Activated T-helper 1 cell treated with anti-CD3 and anti-CD28 coated beads, Interleukin-12 subunit alpha, Interleukin-12 subunit beta, Interleukin-2, Interleukin-4 antibody, amounts not matched to agents 30 ng/mL and 10 ng/mL and 1 ng/mL, durations not matched to agents 14 hours and 24 hours and 36 hours (primary cell): ENCODE measurements at regions of chr7 and their contacts with region 1.

Region 1: GRCh38 chr7:20598459-20599309 is 16.8 kb upstream of the ABCB5 start:
- DNase-seq: no peak
- H3K4me3 Mint-ChIP-seq: no peak overlapping the region
- H3K27ac Mint-ChIP-seq: no peak overlapping the region
- H3K4me1 Mint-ChIP-seq: no peaks in the 10 kb centered on the region
- H3K27me3 Mint-ChIP-seq: peaks cover 3% of the 10 kb centered on the region

Region 2: DNA sequence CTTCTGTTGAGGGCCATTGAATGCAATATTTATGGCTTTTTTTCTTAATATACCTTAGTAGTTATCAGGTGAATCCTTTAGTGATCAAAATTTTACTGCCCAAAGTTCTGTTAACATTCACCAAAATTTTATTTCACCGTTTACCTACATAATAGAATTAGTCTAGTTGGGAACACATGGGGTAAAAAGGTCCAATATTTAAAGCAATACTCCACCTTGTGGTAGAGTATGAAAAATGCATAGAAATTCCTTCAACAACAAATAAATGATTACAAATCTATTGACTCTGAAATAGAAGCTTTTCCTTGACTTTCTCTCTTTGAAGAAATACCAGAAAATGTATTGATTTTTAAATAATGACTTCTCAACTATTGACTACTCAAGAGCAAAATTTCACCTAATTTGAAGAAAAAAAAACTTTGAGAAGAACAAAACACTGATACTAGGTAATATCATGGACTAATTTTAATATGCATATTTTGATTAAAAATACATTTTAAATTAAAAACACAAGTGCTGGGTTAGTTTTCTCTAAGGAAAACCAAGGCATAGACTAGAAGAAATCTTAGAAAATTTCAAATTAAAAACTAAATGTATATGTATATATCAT is 933.2 kb before region 1 on chr7:
- intact Hi-C with region 1: loop called (anchors 1 kb)
- DNase-seq: no peak
- H3K4me3 Mint-ChIP-seq: no peak overlapping the region
- H3K27ac Mint-ChIP-seq: no peak overlapping the region
- H3K4me1 Mint-ChIP-seq: no peaks in the 10 kb centered on the region
- H3K27me3 Mint-ChIP-seq: peaks cover 5% of the 10 kb centered on the region

Region 3: DNA sequence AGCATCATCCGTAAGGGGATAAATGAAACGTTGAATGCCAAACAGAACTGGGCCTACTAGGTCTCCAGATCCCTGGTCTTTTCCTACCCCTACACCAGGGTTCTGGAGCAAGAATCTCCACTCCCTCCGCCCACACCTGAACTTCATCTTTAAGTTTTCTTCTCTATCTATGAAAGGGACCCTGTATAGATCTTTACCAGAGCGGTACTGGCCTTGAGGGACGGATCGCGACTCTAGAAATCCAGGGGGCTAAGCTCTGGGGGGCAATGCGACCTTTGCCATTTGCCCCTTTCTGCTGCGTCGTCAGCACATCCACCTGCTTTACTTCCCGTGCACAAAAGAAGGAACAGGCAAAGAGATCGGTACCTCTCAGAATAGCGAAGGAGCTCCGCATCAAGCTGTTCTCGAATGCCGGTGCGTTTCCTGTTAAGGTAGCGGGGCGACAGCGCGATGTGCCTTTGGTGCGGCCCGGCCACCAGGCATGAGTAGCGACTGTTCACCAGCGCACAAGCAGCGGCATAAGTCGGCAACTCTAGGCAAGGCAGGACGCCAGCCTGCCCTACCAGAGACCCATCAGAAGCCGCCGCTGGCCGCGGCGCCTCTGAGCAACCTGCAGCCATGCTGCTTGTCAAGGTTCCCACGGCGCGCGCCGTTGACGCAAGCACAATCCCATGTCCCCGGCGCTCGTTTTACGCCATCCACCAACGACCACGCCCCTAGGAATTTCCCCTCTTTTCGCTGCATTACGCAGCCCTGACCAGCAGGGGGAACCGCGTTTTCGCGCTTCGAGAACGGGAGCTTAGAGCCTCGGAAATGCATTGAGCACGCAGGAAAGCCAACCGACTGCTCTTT is 890.1 kb before region 1 on chr7 and contains the start of gene POLR1F:
- intact Hi-C with region 1: loop called (anchors 1 kb)
- DNase-seq: peak; percentile 93
- H3K4me3 Mint-ChIP-seq: peak within 1 kb of the TSS; percentile 98
- H3K27ac Mint-ChIP-seq: peak within 1 kb of the TSS; percentile 89
- H3K4me1 Mint-ChIP-seq: peaks cover 40% of the 10 kb centered on the region
- H3K27me3 Mint-ChIP-seq: peaks cover 3% of the 10 kb centered on the region
- total RNA-seq, gene POLR1F: 41.1 and 42.0 TPM in 2 replicates

Region 4: GRCh38 chr7:19713676-19714075 is 885.0 kb before region 1 on chr7:
- intact Hi-C with region 1: loop called (anchors 1 kb)
- DNase-seq: no peak
- H3K4me3 Mint-ChIP-seq: no peak overlapping the region
- H3K27ac Mint-ChIP-seq: no peak overlapping the region
- H3K4me1 Mint-ChIP-seq: peaks cover 12% of the 10 kb centered on the region
- H3K27me3 Mint-ChIP-seq: peaks cover 9% of the 10 kb centered on the region

Region 5: DNA sequence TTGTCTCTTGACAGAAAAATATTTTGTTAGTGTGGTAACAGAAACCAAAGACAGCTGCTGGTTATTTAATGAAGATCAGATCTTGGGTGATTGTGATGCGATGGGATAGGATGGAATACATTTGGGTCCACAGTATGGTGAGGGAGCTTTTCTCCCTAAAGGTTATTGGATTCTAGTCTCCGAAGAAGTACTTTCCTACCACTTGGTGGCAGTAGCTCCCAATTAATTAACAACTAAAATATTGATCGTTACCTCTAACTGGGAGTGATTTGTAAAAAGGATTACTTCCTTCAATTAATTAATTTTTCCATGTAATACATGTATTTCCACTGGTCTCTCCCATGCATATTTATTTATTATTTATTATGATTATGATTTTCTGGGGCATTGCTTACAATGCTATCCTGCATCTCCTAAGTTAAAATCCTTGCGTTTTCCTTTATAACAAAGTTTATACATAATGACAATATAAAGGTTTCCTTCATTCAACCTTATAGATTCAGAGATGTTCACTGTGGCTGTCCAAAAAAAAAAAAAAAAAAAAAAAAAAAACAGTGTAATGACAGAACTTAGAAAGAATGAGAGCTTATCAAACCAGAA is 850.8 kb before region 1 on chr7:
- intact Hi-C with region 1: loop called (anchors 2 kb)
- DNase-seq: no peak
- H3K4me3 Mint-ChIP-seq: no peak overlapping the region
- H3K27ac Mint-ChIP-seq: no peak overlapping the region
- H3K4me1 Mint-ChIP-seq: no peaks in the 10 kb centered on the region
- H3K27me3 Mint-ChIP-seq: no peaks in the 10 kb centered on the region

Region 6: GRCh38 chr7:19754521-19755116 is 844.1 kb before region 1 on chr7:
- intact Hi-C with region 1: loop called (anchors 1 kb)
- DNase-seq: no peak
- H3K4me3 Mint-ChIP-seq: no peak overlapping the region
- H3K27ac Mint-ChIP-seq: no peak overlapping the region
- H3K4me1 Mint-ChIP-seq: no peaks in the 10 kb centered on the region
- H3K27me3 Mint-ChIP-seq: no peaks in the 10 kb centered on the region

Region 7: DNA sequence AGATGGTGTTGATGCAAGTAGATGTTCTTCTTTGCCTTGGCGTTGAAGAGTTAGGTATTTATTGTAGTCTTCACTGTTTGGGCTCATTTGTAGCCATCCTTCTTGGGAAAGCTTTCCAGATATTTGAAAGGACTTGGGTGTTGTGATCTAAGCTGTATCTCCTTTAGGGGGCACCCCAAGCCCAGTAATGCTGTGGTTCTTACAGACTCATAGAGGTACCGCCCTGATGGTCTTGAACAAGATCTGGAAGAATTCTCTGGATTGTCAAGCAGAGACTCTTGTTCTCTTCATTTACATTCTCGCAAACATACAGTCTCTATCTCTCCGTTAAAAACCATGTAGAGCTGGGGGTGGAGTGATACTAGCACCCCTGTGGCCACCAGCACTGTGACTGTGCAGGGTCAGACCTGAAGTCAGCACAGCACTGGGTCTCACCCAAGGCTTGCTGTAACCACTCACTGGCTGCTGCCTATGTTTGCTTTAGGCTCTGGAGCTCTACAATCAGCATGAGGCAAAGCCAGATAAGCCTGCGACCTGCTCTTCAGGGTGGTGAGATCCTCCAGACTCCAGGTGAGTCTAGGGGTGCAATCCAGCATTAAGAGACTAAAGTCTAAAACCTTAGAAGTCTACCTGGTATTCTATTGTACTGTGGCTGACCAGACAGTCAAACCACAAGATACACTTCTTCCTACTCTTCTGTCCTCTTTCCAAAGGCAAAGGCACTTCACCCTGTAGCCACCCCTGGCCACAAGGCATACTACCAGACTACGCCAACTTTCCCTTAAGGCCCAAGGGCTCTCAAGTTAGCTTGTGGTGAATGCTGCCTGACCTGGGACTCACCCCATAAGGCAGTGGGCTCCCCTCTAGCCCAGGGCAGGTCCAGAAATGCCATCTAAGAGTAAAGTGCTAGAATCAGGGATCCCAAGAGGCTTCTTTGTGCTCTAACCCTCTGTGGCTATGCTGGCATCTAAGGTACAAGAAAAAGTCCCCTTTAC is 615.5 kb before region 1 on chr7:
- intact Hi-C with region 1: loop called (anchors 10 kb)
- DNase-seq: no peak
- H3K4me3 Mint-ChIP-seq: no peak overlapping the region
- H3K27ac Mint-ChIP-seq: no peak overlapping the region
- H3K4me1 Mint-ChIP-seq: no peaks in the 10 kb centered on the region
- H3K27me3 Mint-ChIP-seq: no peaks in the 10 kb centered on the region

Region 8: GRCh38 chr7:21215307-21215706 is 616.6 kb after region 1 on chr7:
- intact Hi-C with region 1: no loop called
- DNase-seq: no peak
- H3K4me3 Mint-ChIP-seq: no peak overlapping the region
- H3K27ac Mint-ChIP-seq: no peak overlapping the region
- H3K4me1 Mint-ChIP-seq: no peaks in the 10 kb centered on the region
- H3K27me3 Mint-ChIP-seq: peaks cover 9% of the 10 kb centered on the region